CD4-positive, alpha-beta T cell (primary cell): ENCODE measurements at regions of chr16 and their contacts with region 1.

Region 1: DNA sequence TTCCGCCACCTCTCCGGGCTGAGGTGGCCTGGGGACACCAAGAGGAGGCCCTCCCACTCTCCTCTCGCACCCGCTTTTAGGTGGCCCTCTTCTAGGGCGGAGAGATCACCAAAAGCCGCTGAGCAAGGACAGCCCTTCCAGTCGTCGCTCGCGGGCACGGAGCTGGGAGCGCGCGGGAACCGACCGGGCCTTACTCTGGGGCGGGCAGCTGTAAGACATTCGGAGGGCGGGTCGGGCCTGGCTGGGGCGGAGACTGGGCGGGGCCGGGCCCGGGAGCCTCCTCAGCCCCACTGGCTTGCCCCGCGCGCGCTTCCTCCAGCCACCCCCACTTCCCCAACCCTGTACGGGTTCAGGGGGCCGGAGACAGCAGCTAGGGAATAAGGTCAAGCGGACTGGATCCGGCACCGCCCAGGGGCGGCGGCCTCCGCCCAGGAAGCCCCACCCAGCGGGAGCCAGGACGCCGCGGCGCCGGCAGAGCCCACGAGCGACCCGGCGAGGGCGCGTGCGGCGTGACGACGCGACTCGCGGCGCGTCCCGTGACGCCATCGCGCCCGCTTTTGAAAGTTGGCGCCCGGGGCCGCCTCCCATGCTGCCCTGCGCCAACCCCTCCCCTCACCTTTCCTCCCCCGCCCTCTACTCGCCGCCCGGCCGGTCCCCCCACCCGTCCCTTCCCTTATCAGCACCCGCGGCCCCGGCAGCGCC is 351 bp upstream of the CTCF start:
- DNase-seq: peak; percentile 93 to 99 (median 96)
- ATAC-seq: peak; percentile 74
- H3K4me3 ChIP-seq: peak overlapping the region; percentile 83
- H3K4me3 Mint-ChIP-seq: peak overlapping the region; percentile 91
- H3K27ac ChIP-seq: peak overlapping the region; percentile 82 to 86
- H3K27ac Mint-ChIP-seq: peak overlapping the region; percentile 93
- H3K4me1 ChIP-seq: peaks cover 46% of the 10 kb centered on the region
- H3K4me1 Mint-ChIP-seq: peaks cover 45% of the 10 kb centered on the region
- H3K27me3 ChIP-seq: no peaks in the 10 kb centered on the region
- H3K27me3 Mint-ChIP-seq: no peaks in the 10 kb centered on the region
- CTCF ChIP-seq: peak; percentile 18

Region 2: GRCh38 chr16:66751303-66751991 is 810.5 kb before region 1 on chr16 and contains the start of gene DYNC1LI2:
- CTCF ChIA-PET with region 1: no interaction called
- POLR2A ChIA-PET with region 1: no interaction called
- intact Hi-C with region 1: loop called in 1 of 2 experiments (anchors 5 kb)
- DNase-seq: peak; percentile 66 to 92 (median 78)
- ATAC-seq: peak; percentile 94
- H3K4me3 ChIP-seq: peak within 1 kb of the TSS; percentile 81
- H3K4me3 Mint-ChIP-seq: peak within 1 kb of the TSS; percentile 94
- H3K27ac ChIP-seq: peak within 1 kb of the TSS in 1 of 2 donors; percentile 66
- H3K27ac Mint-ChIP-seq: peak within 1 kb of the TSS; percentile 91
- H3K4me1 ChIP-seq: peaks cover 32% of the 10 kb centered on the region
- H3K4me1 Mint-ChIP-seq: peaks cover 37% of the 10 kb centered on the region
- H3K27me3 ChIP-seq: no peaks in the 10 kb centered on the region
- H3K27me3 Mint-ChIP-seq: peaks cover 19% of the 10 kb centered on the region
- CTCF ChIP-seq: peak; percentile 67
- total RNA-seq, gene DYNC1LI2: 81.8 to 82.4 TPM

Region 3: GRCh38 chr16:67537270-67537635 is 24.7 kb before region 1 on chr16:
- CTCF ChIA-PET with region 1: interaction called, 14 read pairs
- POLR2A ChIA-PET with region 1: interaction called, 358 read pairs
- intact Hi-C with region 1: no loop called
- DNase-seq: peak in 10 of 14 experiments; percentile 27 to 77 (median 57)
- ATAC-seq: peak; percentile 52
- H3K4me3 ChIP-seq: peak overlapping the region; percentile 84
- H3K4me3 Mint-ChIP-seq: peak overlapping the region; percentile 86
- H3K27ac ChIP-seq: peak overlapping the region; percentile 69 to 73
- H3K27ac Mint-ChIP-seq: peak overlapping the region; percentile 66
- H3K4me1 ChIP-seq: peaks cover 37% of the 10 kb centered on the region
- H3K4me1 Mint-ChIP-seq: peaks cover 49% of the 10 kb centered on the region
- H3K27me3 ChIP-seq: no peaks in the 10 kb centered on the region
- H3K27me3 Mint-ChIP-seq: no peaks in the 10 kb centered on the region
- CTCF ChIP-seq: no peak

Region 4: GRCh38 chr16:67595033-67595355 is 33.0 kb after region 1 on chr16:
- CTCF ChIA-PET with region 1: no interaction called
- POLR2A ChIA-PET with region 1: interaction called, 6 read pairs
- intact Hi-C with region 1: loop called in 1 of 2 experiments (anchors 1 kb)
- DNase-seq: peak in 1 of 14 experiments; percentile 12
- ATAC-seq: peak; percentile 44
- H3K4me3 ChIP-seq: no peak overlapping the region
- H3K4me3 Mint-ChIP-seq: no peak overlapping the region
- H3K27ac ChIP-seq: no peak overlapping the region
- H3K27ac Mint-ChIP-seq: peak overlapping the region; percentile 18
- H3K4me1 ChIP-seq: peaks cover 11% of the 10 kb centered on the region
- H3K4me1 Mint-ChIP-seq: peaks cover 58% of the 10 kb centered on the region
- H3K27me3 ChIP-seq: no peaks in the 10 kb centered on the region
- H3K27me3 Mint-ChIP-seq: no peaks in the 10 kb centered on the region
- CTCF ChIP-seq: no peak

Region 5: DNA sequence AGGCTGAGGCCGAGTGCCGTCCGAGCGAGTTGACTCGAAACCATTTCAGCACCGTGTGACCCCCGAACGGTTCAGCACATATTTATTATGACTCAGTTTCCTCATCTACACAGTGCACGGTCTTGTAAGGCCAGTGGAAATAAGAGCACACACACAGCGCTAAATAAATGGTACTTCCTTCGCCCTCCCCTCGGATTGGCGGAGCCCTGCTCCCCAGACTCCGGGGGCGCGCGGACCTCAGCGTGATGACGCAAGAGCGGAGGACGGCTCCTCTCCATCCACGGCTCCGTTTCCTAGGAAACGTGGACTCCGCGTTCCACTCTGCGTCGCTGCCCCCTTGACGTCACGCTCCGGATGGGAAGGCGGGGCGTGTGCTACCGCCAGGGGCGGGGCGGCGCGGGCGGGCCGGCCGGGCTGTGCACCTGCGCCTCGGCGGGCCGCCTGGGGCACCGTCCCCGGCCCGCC is 98.6 kb after region 1 on chr16 and contains the start of gene PARD6A:
- CTCF ChIA-PET with region 1: interaction called, 4 read pairs
- POLR2A ChIA-PET with region 1: interaction called, 52 read pairs
- intact Hi-C with region 1: loop called in 1 of 2 experiments (anchors 1 kb)
- DNase-seq: peak; percentile 86 to 99 (median 93)
- ATAC-seq: peak; percentile 76
- H3K4me3 ChIP-seq: peak within 1 kb of the TSS; percentile 95
- H3K4me3 Mint-ChIP-seq: peak within 1 kb of the TSS; percentile 95
- H3K27ac ChIP-seq: peak within 1 kb of the TSS; percentile 93 to 99
- H3K27ac Mint-ChIP-seq: peak within 1 kb of the TSS; percentile 94
- H3K4me1 ChIP-seq: peaks cover 38% of the 10 kb centered on the region
- H3K4me1 Mint-ChIP-seq: peaks cover 37% of the 10 kb centered on the region
- H3K27me3 ChIP-seq: no peaks in the 10 kb centered on the region
- H3K27me3 Mint-ChIP-seq: no peaks in the 10 kb centered on the region
- CTCF ChIP-seq: no peak
- total RNA-seq, gene PARD6A: 4.5 to 4.7 TPM

Region 6: GRCh38 chr16:67719048-67719777 is 157.2 kb after region 1 on chr16 and contains the start of gene GFOD2:
- CTCF ChIA-PET with region 1: no interaction called
- POLR2A ChIA-PET with region 1: interaction called, 13 read pairs
- intact Hi-C with region 1: no loop called
- DNase-seq: peak; percentile 96 to 100 (median 98)
- ATAC-seq: peak; percentile 94
- H3K4me3 ChIP-seq: peak within 1 kb of the TSS; percentile 76
- H3K4me3 Mint-ChIP-seq: peak within 1 kb of the TSS; percentile 97
- H3K27ac ChIP-seq: peak within 1 kb of the TSS; percentile 81 to 93
- H3K27ac Mint-ChIP-seq: peak within 1 kb of the TSS; percentile 93
- H3K4me1 ChIP-seq: peaks cover 26% of the 10 kb centered on the region
- H3K4me1 Mint-ChIP-seq: peaks cover 42% of the 10 kb centered on the region
- H3K27me3 ChIP-seq: no peaks in the 10 kb centered on the region
- H3K27me3 Mint-ChIP-seq: no peaks in the 10 kb centered on the region
- CTCF ChIP-seq: no peak
- total RNA-seq, gene GFOD2: 2.8 to 3.7 TPM